A549 (cell line): ENCODE measurements at regions of chr6 and their contacts with region 1.

Region 1: DNA sequence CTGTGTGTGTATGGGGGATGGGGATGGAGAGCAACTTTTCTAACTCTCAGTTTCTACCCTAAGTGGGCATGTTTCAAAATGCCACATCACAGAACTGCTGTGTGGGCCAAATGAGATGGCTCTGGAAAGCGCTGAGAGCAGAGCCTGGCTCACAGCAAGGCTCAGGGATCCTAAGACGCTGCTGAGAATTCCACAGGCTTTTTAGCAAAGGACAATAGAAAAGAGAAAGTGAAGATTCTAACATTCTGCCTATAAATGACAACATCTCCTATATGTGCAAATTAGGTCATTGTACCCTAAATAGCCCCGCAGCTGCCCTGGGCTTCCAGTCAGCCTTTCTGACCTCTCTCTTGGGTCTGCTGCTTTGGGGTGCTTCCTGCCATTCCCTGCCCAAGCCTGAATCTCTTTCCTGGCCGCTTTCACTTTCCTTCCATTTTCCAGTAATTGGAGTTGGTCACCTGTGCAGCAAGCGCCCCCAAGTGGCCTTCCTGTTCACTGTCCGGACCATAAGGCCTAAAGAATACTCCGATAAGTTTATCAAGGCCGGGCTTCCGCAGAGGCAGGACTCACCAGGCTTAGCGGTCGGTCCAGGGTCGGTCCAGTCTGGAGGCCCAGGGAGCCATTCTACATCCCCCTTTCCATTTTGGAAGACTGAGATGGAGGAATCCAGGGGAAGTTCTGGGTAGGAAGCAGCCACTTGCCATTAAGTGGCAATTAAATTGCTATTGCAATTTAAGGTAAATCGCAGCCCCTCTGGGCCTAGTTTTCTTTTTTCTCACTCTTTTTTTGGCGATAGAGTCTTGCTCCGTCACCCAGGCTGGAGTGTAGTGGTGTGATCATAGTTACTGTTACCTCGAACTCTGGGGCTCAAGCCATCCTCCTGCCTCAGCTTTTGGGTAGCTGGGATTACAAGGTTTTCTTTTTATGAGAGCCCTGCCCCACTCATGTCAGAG is 6.6 kb upstream of the DDR1 start:
- DNase-seq: peak; percentile 76 to 88
- ATAC-seq: peak; percentile 88 to 94
- H3K4me3 ChIP-seq: peak overlapping the region; percentile 14; the same call in 1 of the 3 replicates
- H3K27ac ChIP-seq: peak overlapping the region; percentile 79 to 91
- H3K4me1 ChIP-seq: peaks cover 15% of the 10 kb centered on the region
- CTCF ChIP-seq: peak; percentile 82
- EP300 ChIP-seq: no peak
- POLR2A ChIP-seq: no peak
- RAD21 ChIP-seq: peak; percentile 93 to 94

Region 2: DNA sequence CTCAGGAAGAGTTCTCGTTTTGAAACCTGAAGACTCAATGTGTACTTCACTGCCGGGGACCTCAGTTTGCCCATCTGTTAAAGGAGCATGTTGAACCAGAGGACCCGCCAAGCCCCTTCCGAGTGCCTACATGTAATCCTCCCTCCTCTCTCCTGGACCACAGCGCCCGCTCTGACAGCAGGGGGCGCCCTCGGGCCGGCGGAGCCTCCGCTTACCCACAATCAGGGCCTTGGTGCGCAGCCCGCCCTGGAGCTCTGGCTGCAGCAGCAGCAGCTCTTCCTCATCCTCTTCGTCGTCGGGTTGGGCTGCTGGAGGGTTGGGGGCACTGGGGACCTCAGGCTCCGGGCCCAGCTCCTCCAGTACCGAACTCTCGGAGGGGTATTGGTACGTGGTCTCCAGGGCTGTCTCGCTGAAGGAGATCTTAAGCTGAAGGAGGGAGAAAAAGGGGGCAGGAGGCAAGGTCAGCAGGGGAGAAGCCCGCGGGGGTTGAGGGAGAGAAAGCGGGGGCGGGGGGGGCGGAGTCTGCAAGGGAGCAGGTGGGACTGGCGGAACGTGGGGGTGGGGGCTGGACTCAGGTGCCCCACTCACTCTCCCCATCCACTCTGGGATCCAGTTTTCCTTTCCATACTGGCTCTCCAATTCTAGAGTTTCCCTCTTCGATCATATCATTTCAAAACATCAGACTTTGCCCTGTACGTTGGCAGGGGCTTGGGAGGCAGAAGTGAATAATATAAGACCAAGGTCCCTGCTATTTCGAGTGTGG is 198.6 kb before region 1 on chr6:
- CTCF ChIA-PET with region 1: interaction called, 22 read pairs
- POLR2A ChIA-PET with region 1: no interaction called
- DNase-seq: peak; percentile 67 to 76
- ATAC-seq: peak; percentile 80 to 88; a peak in 5 of 6 replicates
- H3K4me3 ChIP-seq: 0 out of 3 replicates have a peak overlapping the region, but pooled peaks have one; percentile 19
- H3K27ac ChIP-seq: peak overlapping the region; percentile 59 to 87
- H3K4me1 ChIP-seq: peaks cover 37% of the 10 kb centered on the region
- CTCF ChIP-seq: peak; percentile 85
- EP300 ChIP-seq: no peak
- POLR2A ChIP-seq: no peak
- RAD21 ChIP-seq: peak; percentile 89 to 90

Region 3: GRCh38 chr6:30722280-30723112 is 155.2 kb before region 1 on chr6:
- CTCF ChIA-PET with region 1: interaction called, 20 read pairs
- POLR2A ChIA-PET with region 1: interaction called, 4 read pairs
- DNase-seq: peak; percentile 56 to 73
- ATAC-seq: no peak
- H3K4me3 ChIP-seq: peak overlapping the region; percentile 98
- H3K27ac ChIP-seq: peak overlapping the region; percentile 99 to 100
- H3K4me1 ChIP-seq: peaks cover 58% of the 10 kb centered on the region
- CTCF ChIP-seq: peak; percentile 79
- EP300 ChIP-seq: no peak
- POLR2A ChIP-seq: no peak
- RAD21 ChIP-seq: peak; percentile 64 to 73

Region 4: GRCh38 chr6:30730601-30731435 is 146.9 kb before region 1 on chr6:
- CTCF ChIA-PET with region 1: interaction called, 20 read pairs
- POLR2A ChIA-PET with region 1: interaction called, 4 read pairs
- DNase-seq: peak in 1 of 2 experiments; percentile 74
- ATAC-seq: peak; percentile 63 to 65
- H3K4me3 ChIP-seq: no peak overlapping the region
- H3K27ac ChIP-seq: peak overlapping the region in 1 of 2 experiments; percentile 64; a peak in 3 of 6 replicates
- H3K4me1 ChIP-seq: peaks cover 28% of the 10 kb centered on the region; the same call in 2 of the 3 replicates
- CTCF ChIP-seq: peak; percentile 47; the same call in 2 of the 3 replicates
- EP300 ChIP-seq: no peak
- POLR2A ChIP-seq: no peak
- RAD21 ChIP-seq: peak; percentile 67 to 70

Region 5: DNA sequence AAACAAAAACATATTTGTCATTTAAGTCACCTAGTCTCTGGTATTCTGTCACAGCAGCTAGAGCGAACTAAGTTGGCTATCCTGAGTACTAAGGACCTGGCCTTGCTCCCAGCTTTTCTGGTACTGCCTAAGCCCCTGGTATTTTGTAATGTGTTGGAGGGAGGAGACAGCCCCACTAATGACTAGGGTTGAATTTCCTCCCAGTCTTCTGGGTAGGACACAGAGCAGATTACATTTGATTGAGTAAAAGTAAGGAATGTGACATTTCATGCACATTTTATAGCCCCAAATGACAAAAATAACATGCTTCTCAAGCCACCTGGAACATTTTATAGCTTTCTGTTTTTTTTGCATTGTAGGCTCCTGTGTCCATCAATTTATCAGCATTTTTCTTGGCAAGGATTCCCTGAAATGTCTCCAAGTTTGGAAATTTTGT is 41.2 kb before region 1 on chr6:
- CTCF ChIA-PET with region 1: interaction called, 62 read pairs
- POLR2A ChIA-PET with region 1: no interaction called
- DNase-seq: no peak
- ATAC-seq: no peak
- H3K4me3 ChIP-seq: no peak overlapping the region
- H3K27ac ChIP-seq: no peak overlapping the region
- H3K4me1 ChIP-seq: peaks cover 15% of the 10 kb centered on the region
- CTCF ChIP-seq: no peak
- EP300 ChIP-seq: no peak
- POLR2A ChIP-seq: no peak
- RAD21 ChIP-seq: no peak

Region 6: DNA sequence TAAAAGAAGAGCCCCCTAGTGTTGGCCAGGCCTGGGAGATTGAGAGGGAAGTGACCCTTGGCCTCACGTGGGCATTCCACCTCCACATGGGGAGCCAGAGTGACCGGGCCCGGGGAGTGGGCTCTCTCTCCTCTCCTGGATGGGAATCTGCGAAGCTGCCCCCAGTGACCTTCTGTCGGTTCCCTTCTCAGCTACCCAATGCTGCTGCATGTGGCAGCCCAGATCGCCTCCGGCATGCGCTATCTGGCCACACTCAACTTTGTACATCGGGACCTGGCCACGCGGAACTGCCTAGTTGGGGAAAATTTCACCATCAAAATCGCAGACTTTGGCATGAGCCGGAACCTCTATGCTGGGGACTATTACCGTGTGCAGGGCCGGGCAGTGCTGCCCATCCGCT is 20.2 kb after region 1 on chr6:
- CTCF ChIA-PET with region 1: interaction called, 13 read pairs
- POLR2A ChIA-PET with region 1: no interaction called
- DNase-seq: no peak
- ATAC-seq: no peak
- H3K4me3 ChIP-seq: no peak overlapping the region
- H3K27ac ChIP-seq: no peak overlapping the region
- H3K4me1 ChIP-seq: no peaks in the 10 kb centered on the region
- CTCF ChIP-seq: no peak
- EP300 ChIP-seq: no peak
- POLR2A ChIP-seq: no peak
- RAD21 ChIP-seq: no peak